Dorsolateral prefrontal cortex (tissue), 120 donors: ENCODE measurements at regions of chr16 and their contacts with region 1.

Region 1: DNA sequence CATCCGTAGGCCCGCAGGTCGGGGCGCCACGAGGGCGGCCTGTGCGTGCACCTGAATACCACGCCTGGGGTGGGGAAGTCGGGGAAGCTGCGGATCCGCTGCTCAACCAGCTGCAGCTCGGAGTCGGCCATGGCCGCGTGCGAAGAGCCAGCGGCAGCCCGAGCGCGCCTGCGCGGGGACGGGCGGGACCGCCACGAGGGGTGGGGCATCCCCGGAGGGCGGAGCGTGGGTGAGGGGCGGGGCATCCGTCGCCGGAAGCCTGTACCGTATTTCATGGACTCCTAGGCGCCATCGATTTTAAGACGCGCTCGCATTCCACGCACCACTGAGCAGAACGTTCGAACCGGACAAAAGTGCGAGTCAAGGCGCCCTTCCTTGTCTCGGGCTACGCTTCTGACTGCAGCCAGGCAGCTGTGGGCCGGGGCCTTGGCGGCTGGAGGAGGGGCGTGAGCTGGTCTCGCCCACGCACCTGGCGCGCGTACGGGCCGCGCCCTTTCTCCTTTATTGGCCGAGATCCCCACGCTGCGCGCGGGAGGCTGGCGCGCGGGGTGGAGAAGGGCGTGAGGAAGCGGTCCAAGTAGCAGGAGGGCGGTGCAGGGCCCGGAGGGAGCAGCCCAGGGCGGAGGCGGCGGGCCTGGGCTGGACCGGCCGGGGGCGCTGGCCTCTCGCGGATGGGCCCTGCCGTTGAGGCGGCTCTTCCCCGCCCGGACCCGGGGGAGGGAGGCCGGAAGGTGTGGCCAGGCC is at the start of gene APRT:
- DNase-seq: peak; percentile 83 to 96 (median 92)
- H3K4me3 ChIP-seq: peak within 1 kb of the TSS; percentile 75 to 100 (median 91)
- H3K27ac ChIP-seq: peak within 1 kb of the TSS; percentile 41 to 97 (median 90)
- H3K27me3 ChIP-seq: no peaks in the 10 kb centered on the region
- CTCF ChIP-seq: peak in 7 of 56 donors; percentile 2 to 23 (median 10)
- total RNA-seq, gene APRT: 21.9 to 51.6 (median 33.2) TPM

Region 2: DNA sequence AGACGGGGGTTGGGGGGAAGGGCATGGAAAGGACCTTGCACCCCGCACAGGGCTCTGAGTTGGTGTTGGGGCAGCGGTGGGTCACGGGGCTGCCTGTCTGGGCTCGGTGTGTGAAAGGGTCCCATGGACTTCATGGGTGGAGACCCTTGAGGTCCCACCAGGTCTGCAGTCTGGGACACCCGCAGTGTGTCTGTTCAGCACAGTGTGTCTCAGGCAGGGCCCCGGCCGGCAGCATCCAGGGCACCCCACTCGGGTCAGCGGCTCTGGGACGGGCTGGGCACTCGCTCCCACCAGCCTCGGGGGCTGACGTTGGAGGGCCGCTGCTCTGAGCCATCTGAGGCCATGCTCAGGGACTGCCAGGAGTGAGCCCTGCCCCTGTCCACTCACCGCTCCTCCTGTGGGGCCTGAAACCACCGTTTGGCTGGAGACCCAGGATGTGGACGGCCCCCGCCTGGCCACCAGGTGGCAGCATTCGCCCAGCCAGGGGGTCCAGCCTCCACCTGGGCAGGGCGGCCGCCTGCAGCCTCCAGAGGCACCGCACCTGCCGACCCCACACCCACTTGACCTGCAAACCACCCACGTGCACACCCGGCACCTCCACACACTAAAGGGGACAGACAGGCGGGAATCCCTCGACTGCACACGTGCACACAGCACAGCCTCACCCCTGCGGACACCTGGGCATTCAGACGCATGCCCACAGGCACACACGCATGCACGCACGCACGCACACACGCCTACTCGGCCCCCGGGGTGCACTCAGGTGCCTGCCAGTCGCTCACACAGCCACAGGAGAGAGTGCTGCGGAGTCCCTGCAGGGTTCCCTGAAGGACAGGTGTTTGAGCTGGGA is 369.0 kb before region 1 on chr16:
- intact Hi-C with region 1: loop called in 1 of 2 experiments (anchors 10 kb)
- DNase-seq: peak; percentile 54 to 84 (median 66)
- H3K4me3 ChIP-seq: peak overlapping the region in 7 of 59 donors; percentile 7 to 32 (median 18)
- H3K27ac ChIP-seq: no peak overlapping the region
- H3K27me3 ChIP-seq: peaks cover 0 to 9% (median 0%) of the 10 kb centered on the region in 45 donors
- CTCF ChIP-seq: peak; percentile 77 to 99 (median 95)

Region 3: GRCh38 chr16:88844419-88845036 is 32.6 kb after region 1 on chr16:
- intact Hi-C with region 1: no loop called
- DNase-seq: no peak
- H3K4me3 ChIP-seq: no peak overlapping the region
- H3K27ac ChIP-seq: peak overlapping the region in 9 of 59 donors; percentile 12 to 74 (median 42)
- H3K27me3 ChIP-seq: no peaks in the 10 kb centered on the region
- CTCF ChIP-seq: no peak

Region 4: DNA sequence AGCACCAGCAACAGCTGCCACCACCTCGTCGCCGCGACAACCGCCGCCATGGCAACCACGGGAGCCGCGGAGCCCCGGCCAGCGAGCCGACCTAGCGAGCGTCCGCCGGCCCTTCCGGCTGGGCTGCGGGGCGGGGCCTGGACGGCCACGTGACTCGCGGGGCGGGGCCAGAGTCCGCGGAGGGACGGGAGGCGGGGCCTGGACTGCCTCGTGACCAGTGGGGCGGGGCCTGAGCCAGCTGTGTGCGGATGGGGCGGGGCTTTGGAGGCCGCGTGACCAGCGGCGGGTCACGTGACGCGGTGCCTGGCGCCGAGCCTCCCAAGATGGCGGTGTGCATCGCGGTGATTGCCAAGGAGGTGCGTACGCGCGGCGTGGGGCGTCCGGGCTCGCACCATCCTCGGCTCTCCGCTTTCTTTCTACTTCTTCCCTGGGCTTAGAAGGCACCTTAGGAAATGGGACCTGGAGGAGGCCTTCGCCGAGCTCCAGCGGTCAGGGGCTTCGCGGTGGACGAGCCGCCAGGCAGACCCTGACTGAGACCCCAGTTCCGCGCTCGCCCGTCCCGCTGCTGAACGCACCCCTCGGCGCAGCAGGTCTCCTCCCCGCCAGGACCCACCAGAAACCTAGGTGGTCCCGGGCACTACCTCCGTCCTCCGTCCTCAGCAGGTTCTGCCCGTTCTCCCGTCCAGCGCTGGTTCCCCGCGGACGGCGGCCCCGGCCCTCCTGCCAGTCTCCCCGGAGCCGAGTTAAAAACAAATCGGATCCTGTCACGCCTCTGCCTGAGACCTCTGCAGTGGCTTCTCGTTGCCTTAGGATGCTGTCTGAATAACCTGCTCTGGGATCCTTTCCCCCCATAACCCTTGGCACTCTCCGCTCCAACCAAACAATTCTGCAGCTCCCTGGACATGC is 45.1 kb after region 1 on chr16 and contains the starts of genes GALNS and TRAPPC2L:
- intact Hi-C with region 1: loop called (anchors 2 to 5 kb)
- DNase-seq: peak; percentile 98 to 100 (median 99)
- H3K4me3 ChIP-seq: peak within 1 kb of the TSS; percentile 66 to 100 (median 97)
- H3K27ac ChIP-seq: peak within 1 kb of the TSS; percentile 85 to 100 (median 97)
- H3K27me3 ChIP-seq: no peaks in the 10 kb centered on the region
- CTCF ChIP-seq: peak in 8 of 56 donors; percentile 6 to 30 (median 10)
- total RNA-seq, gene GALNS: 22.5 to 60.1 (median 36.3) TPM
- total RNA-seq, gene TRAPPC2L: 30.9 to 83.9 (median 57.9) TPM

Region 5: GRCh38 chr16:89171463-89172170 is 359.7 kb after region 1 on chr16 and contains the start of gene CDH15:
- intact Hi-C with region 1: loop called in 1 of 2 experiments (anchors 2 kb)
- DNase-seq: peak; percentile 67 to 99 (median 82)
- H3K4me3 ChIP-seq: peak within 1 kb of the TSS in 58 of 59 donors; percentile 7 to 60 (median 43)
- H3K27ac ChIP-seq: peak within 1 kb of the TSS in 1 of 59 donors; percentile 91
- H3K27me3 ChIP-seq: peaks cover 0 to 39% (median 6%) of the 10 kb centered on the region in 45 donors
- CTCF ChIP-seq: no peak
- total RNA-seq, gene CDH15: 0.16 to 0.81 (median 0.31) TPM in 14 of 120 experiments, not detected in the others

Region 6: GRCh38 chr16:89217388-89218191 is 405.6 kb after region 1 on chr16 and contains the start of gene ZNF778:
- intact Hi-C with region 1: loop called in 1 of 2 experiments (anchors 10 kb)
- DNase-seq: peak; percentile 70 to 90 (median 82)
- H3K4me3 ChIP-seq: peak within 1 kb of the TSS; percentile 60 to 100 (median 93)
- H3K27ac ChIP-seq: peak within 1 kb of the TSS; percentile 41 to 98 (median 92)
- H3K27me3 ChIP-seq: no peaks in the 10 kb centered on the region
- CTCF ChIP-seq: peak in 32 of 56 donors; percentile 10 to 51 (median 29)
- total RNA-seq, gene ZNF778: 10.1 to 35.3 (median 17.7) TPM